ENCODE measurements at regions of chr7 and their contacts with region 1.

Region 1: GRCh38 chr7:151992375-151992774 is 33.1 kb upstream of the GALNT11 start:
- DNase-seq: peak; percentile 88
- H3K4me3 ChIP-seq: no peak overlapping the region
- H3K27ac ChIP-seq: no peak overlapping the region
- H3K4me1 ChIP-seq: no peaks in the 10 kb centered on the region
- H3K27me3 ChIP-seq: no peaks in the 10 kb centered on the region
- CTCF ChIP-seq: peak; percentile 56

Region 2: GRCh38 chr7:151978616-151979015 is 13.8 kb before region 1 on chr7:
- CTCF ChIA-PET with region 1: no interaction called
- POLR2A ChIA-PET with region 1: no interaction called
- intact Hi-C with region 1: no loop called
- DNase-seq: peak; percentile 24
- H3K4me3 ChIP-seq: no peak overlapping the region
- H3K27ac ChIP-seq: no peak overlapping the region
- H3K4me1 ChIP-seq: no peaks in the 10 kb centered on the region
- H3K27me3 ChIP-seq: no peaks in the 10 kb centered on the region
- CTCF ChIP-seq: no peak

Region 3: DNA sequence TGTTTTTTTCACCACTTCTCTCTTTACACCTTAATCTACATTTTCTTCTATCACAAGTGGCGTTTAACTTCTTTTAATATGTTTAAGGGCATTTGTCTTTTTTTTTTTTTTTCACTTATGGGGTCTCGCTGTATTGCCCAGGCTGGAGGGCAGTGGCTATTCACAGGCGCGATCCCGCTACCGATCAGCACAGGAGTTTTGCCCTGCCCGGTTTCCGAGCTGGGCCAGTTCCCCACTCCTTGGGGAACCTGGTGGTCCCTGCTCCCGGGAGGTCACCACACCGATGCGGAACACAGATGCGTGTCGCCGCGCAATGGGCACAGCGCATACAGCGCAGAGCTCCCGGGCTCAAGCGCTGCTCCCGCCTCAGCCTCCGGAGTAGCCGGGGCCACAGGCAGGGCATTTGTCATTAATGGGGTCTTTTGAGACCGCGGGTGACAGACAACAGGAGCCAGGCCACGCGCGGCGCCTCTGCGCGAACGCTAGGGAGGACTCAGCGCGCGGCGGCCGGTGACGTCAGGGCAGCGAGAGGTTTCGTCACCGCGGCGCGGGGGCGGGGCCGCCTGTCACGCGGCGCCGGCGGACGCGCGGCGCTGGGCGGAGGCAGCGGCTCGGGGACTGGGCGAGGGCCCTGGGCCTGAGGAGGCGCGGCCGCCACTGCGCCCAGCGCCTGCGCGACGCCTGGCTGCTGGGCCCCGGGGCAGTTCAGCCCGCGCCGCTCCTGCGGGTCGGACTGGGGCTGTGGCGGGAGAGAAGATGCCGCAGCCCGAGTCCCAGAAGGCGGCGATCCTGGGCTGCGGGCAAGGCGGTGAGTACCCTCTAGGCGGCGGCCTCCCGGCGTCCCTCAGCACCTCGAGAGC is 32.9 kb after region 1 on chr7 and contains the start of gene GALNT11:
- CTCF ChIA-PET with region 1: no interaction called
- POLR2A ChIA-PET with region 1: no interaction called
- intact Hi-C with region 1: loop called (anchors 1 kb)
- DNase-seq: peak; percentile 92
- H3K4me3 ChIP-seq: peak within 1 kb of the TSS; percentile 71
- H3K27ac ChIP-seq: peak within 1 kb of the TSS; percentile 84
- H3K4me1 ChIP-seq: no peaks in the 10 kb centered on the region
- H3K27me3 ChIP-seq: no peaks in the 10 kb centered on the region
- CTCF ChIP-seq: peak; percentile 32; the same call in 1 of the 2 replicates
- total RNA-seq, gene GALNT11: 30.4 and 35.5 TPM in 2 replicates

Region 4: DNA sequence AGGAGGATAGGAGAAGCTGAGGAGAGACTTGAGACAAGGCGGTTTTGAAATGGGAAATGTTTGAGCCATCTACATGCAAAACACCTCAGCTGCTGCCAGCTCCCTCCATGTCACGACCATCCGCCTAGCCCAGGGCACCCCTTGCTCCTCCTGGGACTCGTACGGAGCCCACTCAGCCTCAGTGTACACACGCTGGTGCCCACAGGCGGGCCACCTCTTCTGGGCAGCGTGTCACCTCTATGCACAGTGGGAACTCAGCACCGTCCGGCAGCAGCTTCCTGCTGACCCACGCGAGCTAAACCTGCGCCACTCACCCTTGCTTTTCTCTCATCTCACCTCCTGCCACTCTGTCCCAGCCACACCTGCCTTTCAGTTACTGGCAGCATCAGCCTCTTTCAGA is 141.4 kb after region 1 on chr7:
- CTCF ChIA-PET with region 1: no interaction called
- POLR2A ChIA-PET with region 1: no interaction called
- intact Hi-C with region 1: no loop called
- DNase-seq: no peak
- H3K4me3 ChIP-seq: no peak overlapping the region
- H3K27ac ChIP-seq: no peak overlapping the region
- H3K4me1 ChIP-seq: no peaks in the 10 kb centered on the region
- H3K27me3 ChIP-seq: no peaks in the 10 kb centered on the region
- CTCF ChIP-seq: no peak

Region 5: GRCh38 chr7:152145853-152146466 is 153.6 kb after region 1 on chr7:
- CTCF ChIA-PET with region 1: no interaction called
- POLR2A ChIA-PET with region 1: no interaction called
- intact Hi-C with region 1: loop called (anchors 5 kb)
- DNase-seq: peak; percentile 60
- H3K4me3 ChIP-seq: no peak overlapping the region
- H3K27ac ChIP-seq: no peak overlapping the region
- H3K4me1 ChIP-seq: peaks cover 3% of the 10 kb centered on the region
- H3K27me3 ChIP-seq: no peaks in the 10 kb centered on the region
- CTCF ChIP-seq: peak; percentile 79

Measured in A673 (cell line).